Astrocyte of the cerebellum (primary cell): ENCODE measurements at regions of chr11 and their contacts with region 1.

Region 1: GRCh38 chr11:11966826-11967668 is 41.4 kb downstream of the DKK3 start:
- DNase-seq: no peak
- H3K4me3 ChIP-seq: no peak overlapping the region
- CTCF ChIP-seq: peak; percentile 79

Region 2: DNA sequence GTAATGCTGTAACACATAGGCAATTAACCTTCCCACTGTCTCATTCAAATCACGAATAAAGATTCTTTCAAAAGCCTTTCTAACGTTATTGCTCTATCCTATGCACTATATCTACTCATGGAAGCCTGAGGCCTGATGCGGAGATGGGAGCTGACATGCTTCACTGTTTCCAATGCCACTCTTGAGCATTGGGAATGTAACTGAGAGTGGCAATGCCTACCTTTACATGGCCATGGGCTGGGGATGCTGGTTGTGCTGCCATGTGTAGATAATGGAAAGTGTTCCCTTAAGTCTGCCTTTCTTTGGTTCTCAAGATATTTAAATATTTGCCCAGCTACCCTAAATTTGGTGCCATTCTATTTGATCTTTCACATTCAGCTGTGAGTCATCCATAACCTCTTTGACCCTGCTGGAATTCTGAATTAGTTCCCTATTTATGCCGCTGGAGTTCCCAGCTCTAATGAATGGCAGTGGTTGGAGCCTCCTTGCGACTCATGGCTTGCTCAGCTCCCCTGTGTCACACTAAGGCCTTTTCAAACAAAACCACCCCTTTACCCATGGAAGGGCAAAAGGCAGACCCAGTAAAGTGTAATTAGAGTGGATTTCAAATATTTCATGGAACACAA is 62.8 kb after region 1 on chr11:
- in situ Hi-C with region 1: loop called (anchors 5 kb)
- DNase-seq: no peak
- H3K4me3 ChIP-seq: no peak overlapping the region
- CTCF ChIP-seq: no peak